ENCODE measurements at regions of chr4 and their contacts with region 1.

Region 1: GRCh38 chr4:48931459-48931858 is 24.9 kb upstream of the OCIAD2 start:
- H3K4me3 ChIP-seq: no peak overlapping the region
- H3K27ac ChIP-seq: no peak overlapping the region
- H3K4me1 ChIP-seq: no peaks in the 10 kb centered on the region
- CTCF ChIP-seq: no peak

Region 2: DNA sequence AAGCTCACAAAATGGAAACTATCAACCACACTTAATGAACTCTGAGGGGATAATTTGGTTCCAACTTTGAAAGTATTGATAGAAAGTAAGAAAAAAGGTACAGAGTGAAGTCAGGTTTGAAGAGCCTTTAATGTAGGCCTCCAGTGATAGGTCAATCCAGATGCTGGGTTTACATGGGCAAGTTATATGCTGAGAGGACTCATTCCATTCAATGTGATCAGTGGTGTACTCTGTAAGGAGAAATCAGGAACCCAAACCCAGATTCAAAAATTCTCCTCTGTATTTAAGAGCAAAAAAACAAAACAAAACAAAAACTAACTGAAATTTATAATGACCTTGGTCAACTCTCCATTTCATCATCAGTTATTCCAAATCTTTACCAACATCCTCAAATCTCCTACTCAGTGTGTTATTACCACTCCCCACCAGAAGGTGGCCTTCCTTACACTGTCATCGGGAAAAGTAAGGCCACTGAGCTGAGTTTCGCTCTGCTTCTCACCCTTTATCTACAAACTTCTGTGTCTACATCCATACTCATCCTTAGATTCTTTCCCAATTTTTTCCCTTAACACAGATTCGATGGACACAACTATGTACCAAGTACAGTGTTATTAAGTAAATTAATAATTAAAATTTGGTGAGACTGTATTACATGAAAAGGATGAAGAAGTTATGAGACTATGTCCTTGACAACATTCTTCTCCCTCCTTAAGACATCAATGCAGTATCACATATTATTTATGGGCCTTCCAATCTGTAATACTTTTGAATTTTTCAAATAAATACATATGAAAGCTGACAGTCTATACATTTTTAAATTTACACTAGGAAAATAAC is 353.1 kb before region 1 on chr4:
- CTCF ChIA-PET with region 1: no interaction called
- POLR2A ChIA-PET with region 1: no interaction called
- H3K4me3 ChIP-seq: no peak overlapping the region
- H3K27ac ChIP-seq: no peak overlapping the region
- H3K4me1 ChIP-seq: no peaks in the 10 kb centered on the region
- CTCF ChIP-seq: 0 out of 2 replicates have a peak, but pooled peaks have one; percentile 54

Region 3: GRCh38 chr4:48898733-48899431 is 32.6 kb before region 1 on chr4:
- CTCF ChIA-PET with region 1: no interaction called
- POLR2A ChIA-PET with region 1: no interaction called
- H3K4me3 ChIP-seq: no peak overlapping the region
- H3K27ac ChIP-seq: no peak overlapping the region
- H3K4me1 ChIP-seq: no peaks in the 10 kb centered on the region
- CTCF ChIP-seq: no peak

Region 4: DNA sequence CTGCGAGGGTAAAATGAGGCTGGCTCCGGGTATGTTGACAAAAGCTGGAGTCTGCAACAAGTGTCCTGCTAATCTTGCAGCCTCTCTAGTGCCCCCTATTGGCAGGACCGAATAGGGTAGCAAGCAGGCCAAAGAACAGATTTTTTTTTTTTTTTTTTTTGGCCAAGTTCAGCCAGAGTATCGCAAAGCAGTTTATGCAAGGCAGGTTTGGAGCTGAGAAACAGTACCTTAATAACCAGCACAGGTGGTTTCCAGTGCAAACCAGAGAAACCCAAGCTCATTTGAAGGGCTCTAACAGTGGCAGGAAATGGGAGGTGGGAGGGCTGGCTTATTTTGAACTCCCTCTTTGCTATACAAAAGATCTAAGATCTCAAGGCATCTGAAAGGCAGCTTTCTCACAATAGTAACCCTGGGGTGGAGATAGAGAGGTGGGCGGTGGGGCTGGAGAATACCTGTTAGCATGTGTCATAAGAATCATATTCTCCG is 13.3 kb after region 1 on chr4:
- CTCF ChIA-PET with region 1: interaction called, 25 read pairs
- POLR2A ChIA-PET with region 1: no interaction called
- H3K4me3 ChIP-seq: no peak overlapping the region
- H3K27ac ChIP-seq: no peak overlapping the region
- H3K4me1 ChIP-seq: no peaks in the 10 kb centered on the region
- CTCF ChIP-seq: no peak